ENCODE measurements at regions of chr19 and their contacts with region 1.

Region 1: DNA sequence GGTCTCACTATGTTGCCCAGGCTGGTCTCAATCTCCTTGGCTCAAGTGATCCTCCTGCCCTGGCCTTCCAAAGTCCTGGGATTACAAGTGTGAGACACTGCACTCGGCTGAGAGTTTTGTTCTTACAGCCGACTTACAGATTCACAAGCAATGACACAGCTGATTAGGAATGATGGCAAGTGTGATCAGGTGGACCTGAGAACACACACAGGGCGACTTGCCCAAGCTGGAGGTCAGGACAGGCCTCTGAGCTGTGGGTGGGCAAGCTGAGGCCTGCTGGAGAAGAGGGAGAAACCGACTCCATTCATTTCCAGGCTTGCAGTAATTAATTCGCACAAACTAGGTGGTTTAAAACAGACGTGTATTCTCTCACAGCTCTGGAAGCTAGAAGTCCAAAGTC is 8.1 kb upstream of the ATG4D start:
- DNase-seq: peak in 1 of 2 donors; percentile 65
- H3K4me3 ChIP-seq: no peak overlapping the region
- H3K27ac ChIP-seq: no peak overlapping the region
- H3K4me1 ChIP-seq: no peaks in the 10 kb centered on the region
- H3K27me3 ChIP-seq: no peaks in the 10 kb centered on the region
- CTCF ChIP-seq: no peak
- POLR2A ChIP-seq: no peak

Region 2: DNA sequence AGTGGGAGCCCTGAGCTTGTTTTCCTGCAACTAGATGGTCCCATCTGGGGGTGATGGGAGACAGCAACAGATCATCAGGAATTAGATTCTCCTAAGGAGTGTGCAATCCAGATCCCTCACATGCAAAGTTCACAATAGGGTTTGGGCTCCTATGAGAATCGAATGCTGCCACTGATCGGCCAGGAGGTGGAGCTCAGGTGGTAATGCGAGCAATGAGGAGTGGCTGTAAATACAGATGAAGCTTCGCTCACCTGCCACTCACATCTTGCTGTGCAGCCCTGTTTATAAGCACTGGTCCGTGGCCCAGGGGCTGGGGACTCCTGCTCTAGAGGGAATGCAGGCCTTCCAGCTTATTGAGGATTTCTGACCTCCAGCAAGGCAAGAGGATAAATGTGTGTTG is 1709.2 kb before region 1 on chr19:
- intact Hi-C with region 1: no loop called
- DNase-seq: no peak
- H3K4me3 ChIP-seq: no peak overlapping the region
- H3K27ac ChIP-seq: no peak overlapping the region
- H3K4me1 ChIP-seq: peaks cover 0 to 6% of the 10 kb centered on the region in 2 donors
- H3K27me3 ChIP-seq: no peaks in the 10 kb centered on the region
- CTCF ChIP-seq: no peak
- POLR2A ChIP-seq: no peak

Region 3: GRCh38 chr19:10565567-10566407 is 30.2 kb after region 1 on chr19 and contains the start of gene KRI1:
- intact Hi-C with region 1: loop called (anchors 1 kb)
- DNase-seq: peak; percentile 96 to 97
- H3K4me3 ChIP-seq: peak within 1 kb of the TSS; percentile 87 to 91 (median 90)
- H3K27ac ChIP-seq: peak within 1 kb of the TSS; percentile 80 to 89
- H3K4me1 ChIP-seq: peaks cover 0 to 12% of the 10 kb centered on the region in 2 donors
- H3K27me3 ChIP-seq: no peaks in the 10 kb centered on the region
- CTCF ChIP-seq: peak; percentile 24 to 51 (median 38)
- POLR2A ChIP-seq: peak; percentile 68
- total RNA-seq, gene KRI1: 16.4 to 23.6 (median 17.6) TPM

Measured in breast epithelium (tissue), 4 donors.